ENCODE measurements at regions of chr1 and their contacts with region 1.

Region 1: GRCh38 chr1:27489910-27490741 is at the start of gene WASF2:
- DNase-seq: peak; percentile 98
- ATAC-seq: peak; percentile 91 to 96 (median 94)
- H3K4me3 ChIP-seq: peak within 1 kb of the TSS; percentile 94
- H3K27ac ChIP-seq: peak within 1 kb of the TSS; percentile 99
- H3K4me1 ChIP-seq: peaks cover 30% of the 10 kb centered on the region
- H3K27me3 ChIP-seq: no peaks in the 10 kb centered on the region
- CTCF ChIP-seq: no peak
- total RNA-seq, gene WASF2: 29.4 to 40.6 (median 35.9) TPM

Region 2: DNA sequence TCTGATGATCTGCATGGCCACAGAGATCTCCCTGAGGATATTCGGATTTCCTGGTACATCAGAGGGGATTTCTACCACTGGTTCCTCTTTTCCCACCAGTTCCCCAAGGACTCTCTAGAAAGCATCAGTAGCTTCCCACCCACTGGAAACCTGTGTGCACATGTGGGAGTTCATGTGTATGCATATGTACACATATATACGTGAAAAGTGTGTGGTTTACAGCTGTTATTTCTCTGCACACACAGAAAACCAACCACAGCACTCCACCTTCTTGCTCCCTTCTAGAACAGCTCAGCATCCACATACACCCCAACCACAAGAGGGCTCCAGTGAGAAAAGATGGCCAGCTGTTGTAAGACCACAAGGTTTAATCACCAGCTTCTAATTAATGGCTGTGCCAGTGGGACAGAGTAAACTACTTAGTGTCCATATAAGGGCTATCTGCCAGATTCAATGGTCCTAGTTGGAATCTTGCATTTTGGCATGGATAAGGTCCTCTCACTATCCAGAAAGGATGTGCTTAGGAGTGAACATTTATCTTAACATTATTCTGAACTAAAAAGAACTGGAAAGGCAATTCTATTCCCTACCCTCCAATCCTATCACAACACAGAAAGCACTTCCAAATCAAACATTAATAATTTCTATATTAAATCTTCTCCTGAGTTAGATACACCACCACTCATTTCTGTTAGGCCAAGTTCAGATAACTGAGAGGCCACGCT is 73.6 kb before region 1 on chr1:
- intact Hi-C with region 1: loop called in 1 of 2 experiments (anchors 1 kb)
- DNase-seq: no peak
- ATAC-seq: peak; percentile 53 to 63 (median 56)
- H3K4me3 ChIP-seq: no peak overlapping the region
- H3K27ac ChIP-seq: peak overlapping the region; percentile 88
- H3K4me1 ChIP-seq: peaks cover 52% of the 10 kb centered on the region
- H3K27me3 ChIP-seq: no peaks in the 10 kb centered on the region
- CTCF ChIP-seq: peak; percentile 69

Region 3: DNA sequence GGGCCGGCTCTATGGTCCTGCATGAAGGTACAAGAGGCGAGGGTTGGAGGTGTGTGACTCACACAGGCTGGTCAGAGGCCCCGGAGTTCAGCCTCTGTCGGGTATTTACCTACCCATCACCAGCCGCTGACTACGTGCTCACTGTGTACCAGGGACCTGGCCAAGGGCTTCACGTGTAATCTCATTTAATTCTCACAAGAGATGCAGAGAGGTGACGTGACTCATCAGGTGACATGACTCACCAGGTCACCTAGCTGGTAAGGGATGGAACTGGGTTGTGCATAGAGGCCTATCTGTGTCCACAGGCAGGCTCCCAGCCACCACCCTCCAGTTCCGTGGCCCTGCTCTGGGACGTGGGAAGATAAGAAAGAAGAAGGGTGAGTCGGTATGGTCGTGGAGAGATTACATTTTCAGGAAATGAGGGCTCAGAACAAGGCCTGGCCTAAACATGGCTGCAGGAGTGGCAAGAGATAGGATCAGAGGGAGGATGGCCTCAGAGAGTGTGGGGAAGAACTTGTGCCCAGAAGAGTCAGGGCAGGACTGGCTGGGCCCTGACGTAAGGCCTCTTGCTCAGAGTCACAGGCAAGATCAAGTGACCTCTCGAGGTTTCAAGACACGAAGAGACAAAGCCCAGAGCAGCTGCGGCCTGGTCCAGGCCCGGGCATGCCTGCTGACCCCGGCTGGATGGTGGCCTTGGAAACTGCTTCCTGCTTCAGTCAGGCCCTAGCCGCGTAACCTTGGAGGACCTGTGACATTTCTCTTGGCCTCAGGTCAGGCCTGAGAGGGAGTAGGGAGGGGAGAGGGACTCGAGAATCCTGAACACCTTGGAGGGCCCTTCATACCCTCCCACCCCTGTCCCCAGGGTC is 52.5 kb after region 1 on chr1:
- intact Hi-C with region 1: loop called in 1 of 2 experiments (anchors 5 kb)
- DNase-seq: peak; percentile 79 to 92
- ATAC-seq: peak; percentile 67 to 78 (median 76)
- H3K4me3 ChIP-seq: no peak overlapping the region
- H3K27ac ChIP-seq: peak overlapping the region; percentile 95
- H3K4me1 ChIP-seq: peaks cover 93% of the 10 kb centered on the region
- H3K27me3 ChIP-seq: no peaks in the 10 kb centered on the region
- CTCF ChIP-seq: no peak